Common myeloid progenitor, CD34-positive (primary cell): ENCODE measurements at regions of chr1 and their contacts with region 1.

Region 1: GRCh38 chr1:179809506-179810366 is 66.6 kb downstream of the FAM163A start:
- DNase-seq: peak; percentile 78 to 88 (median 85)
- H3K4me3 ChIP-seq: no peak overlapping the region
- H3K27ac ChIP-seq: no peak overlapping the region
- H3K4me1 ChIP-seq: peaks cover 0 to 6% (median 4%) of the 10 kb centered on the region in 4 experiments
- H3K27me3 ChIP-seq: peaks cover 0 to 4% (median 0%) of the 10 kb centered on the region in 5 experiments

Region 2: GRCh38 chr1:179129702-179130473 is 679.8 kb before region 1 on chr1:
- CTCF ChIA-PET with region 1: no interaction called
- POLR2A ChIA-PET with region 1: no interaction called
- DNase-seq: peak; percentile 47 to 84 (median 74)
- H3K4me3 ChIP-seq: peak overlapping the region in 3 of 7 experiments; percentile 11 to 42 (median 22)
- H3K27ac ChIP-seq: peak overlapping the region in 1 of 2 experiments; percentile 5
- H3K4me1 ChIP-seq: peaks cover 0 to 10% (median 4%) of the 10 kb centered on the region in 4 experiments
- H3K27me3 ChIP-seq: no peaks in the 10 kb centered on the region

Region 3: GRCh38 chr1:179706339-179706941 is 103.3 kb before region 1 on chr1:
- CTCF ChIA-PET with region 1: interaction called, 561 read pairs
- POLR2A ChIA-PET with region 1: interaction called, 8 read pairs
- DNase-seq: peak; percentile 70 to 86 (median 82)
- H3K4me3 ChIP-seq: no peak overlapping the region
- H3K27ac ChIP-seq: no peak overlapping the region
- H3K4me1 ChIP-seq: peaks cover 0 to 13% (median 3%) of the 10 kb centered on the region in 4 experiments
- H3K27me3 ChIP-seq: peaks cover 0 to 11% (median 0%) of the 10 kb centered on the region in 5 experiments

Region 4: GRCh38 chr1:179793281-179793680 is 16.5 kb before region 1 on chr1:
- CTCF ChIA-PET with region 1: interaction called, 23 read pairs
- POLR2A ChIA-PET with region 1: interaction called, 4 read pairs
- DNase-seq: no peak
- H3K4me3 ChIP-seq: no peak overlapping the region
- H3K27ac ChIP-seq: no peak overlapping the region
- H3K4me1 ChIP-seq: no peaks in the 10 kb centered on the region
- H3K27me3 ChIP-seq: peaks cover 0 to 3% (median 0%) of the 10 kb centered on the region in 5 experiments

Region 5: DNA sequence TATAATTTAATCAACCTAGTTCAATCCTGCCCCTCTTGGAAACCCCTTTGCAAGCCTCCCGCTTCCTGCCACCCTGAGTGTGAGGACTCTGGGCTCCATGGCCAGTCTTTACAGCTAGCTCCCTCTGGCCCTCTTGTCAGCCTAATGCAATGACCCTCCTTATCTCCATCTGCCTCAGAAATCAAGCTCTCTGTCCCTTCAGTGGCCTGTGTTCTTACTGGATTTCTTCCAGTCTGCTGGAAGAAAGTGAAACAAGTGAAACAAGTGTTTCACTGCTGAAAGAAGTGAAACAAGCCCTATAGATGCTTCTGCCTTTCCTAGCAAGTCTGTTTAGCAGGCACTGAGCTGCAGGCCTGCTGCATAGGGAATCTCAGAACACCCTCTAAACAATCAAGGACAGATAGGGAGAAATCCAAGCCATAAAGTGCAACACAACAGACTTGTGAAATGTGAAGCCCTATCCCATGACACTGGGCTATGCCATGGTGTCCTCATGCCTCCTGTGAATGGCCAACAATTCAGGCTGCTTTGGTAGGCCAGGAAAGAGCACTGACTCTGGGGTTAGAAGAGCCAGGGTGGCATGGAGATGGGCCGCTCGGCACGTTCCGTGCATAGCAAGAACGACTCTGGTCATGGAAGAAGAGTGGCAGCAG is 10.7 kb before region 1 on chr1:
- CTCF ChIA-PET with region 1: interaction called, 23 read pairs
- POLR2A ChIA-PET with region 1: interaction called, 4 read pairs
- DNase-seq: no peak
- H3K4me3 ChIP-seq: no peak overlapping the region
- H3K27ac ChIP-seq: no peak overlapping the region
- H3K4me1 ChIP-seq: no peaks in the 10 kb centered on the region
- H3K27me3 ChIP-seq: peaks cover 0 to 6% (median 0%) of the 10 kb centered on the region in 5 experiments

Region 6: DNA sequence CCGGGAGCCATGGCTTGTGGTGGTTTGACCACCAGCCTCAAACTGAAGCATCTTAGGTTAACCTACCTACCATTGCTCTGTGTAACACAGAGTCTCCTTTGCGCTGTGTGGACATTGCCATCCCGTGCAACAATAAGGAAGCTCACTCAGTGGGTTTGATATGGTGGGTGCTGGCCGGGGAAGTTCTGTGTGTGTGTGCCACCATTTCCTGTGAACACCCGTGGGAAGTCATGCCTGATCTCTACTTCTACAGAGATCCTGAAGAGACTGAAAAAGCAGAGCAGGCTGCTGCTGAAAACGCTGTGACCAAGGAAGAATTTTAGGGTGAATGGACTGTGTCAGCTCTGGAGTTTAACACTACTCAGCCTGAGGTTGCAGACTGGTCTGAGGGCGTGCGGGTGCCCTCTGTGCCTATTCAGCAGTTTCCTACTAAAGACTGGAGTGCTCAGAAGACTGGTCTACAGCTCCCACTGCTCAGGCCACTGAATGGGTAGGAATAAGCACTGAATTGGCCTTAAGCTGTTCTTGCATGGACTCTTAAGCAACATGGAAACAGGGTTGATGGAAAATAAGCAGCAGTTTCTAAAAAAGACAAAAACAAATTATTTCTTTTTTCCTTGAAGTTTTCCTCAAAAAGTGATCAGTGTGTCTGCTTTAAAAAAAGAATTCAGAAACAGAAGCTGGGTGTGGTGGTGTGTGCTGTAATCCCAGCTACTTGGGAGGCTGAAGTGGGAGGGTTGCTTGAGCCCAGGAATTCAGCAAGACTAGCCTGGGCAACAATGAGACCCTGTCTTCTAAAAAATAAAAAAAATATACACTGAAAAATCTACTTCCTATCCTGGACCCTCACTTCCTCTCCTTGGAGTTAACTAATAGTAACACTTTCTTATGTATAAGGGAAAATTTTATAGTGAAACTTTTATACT is 159.5 kb after region 1 on chr1:
- CTCF ChIA-PET with region 1: no interaction called
- POLR2A ChIA-PET with region 1: no interaction called
- DNase-seq: no peak
- H3K4me3 ChIP-seq: no peak overlapping the region
- H3K27ac ChIP-seq: peak overlapping the region in 1 of 2 experiments; percentile 27
- H3K4me1 ChIP-seq: peaks cover 0 to 22% (median 8%) of the 10 kb centered on the region in 4 experiments
- H3K27me3 ChIP-seq: no peaks in the 10 kb centered on the region

Region 7: GRCh38 chr1:180040034-180040433 is 230.3 kb after region 1 on chr1:
- CTCF ChIA-PET with region 1: no interaction called
- POLR2A ChIA-PET with region 1: no interaction called
- DNase-seq: no peak
- H3K4me3 ChIP-seq: no peak overlapping the region
- H3K27ac ChIP-seq: no peak overlapping the region
- H3K4me1 ChIP-seq: peaks cover 0 to 5% (median 0%) of the 10 kb centered on the region in 4 experiments
- H3K27me3 ChIP-seq: no peaks in the 10 kb centered on the region

Region 8: DNA sequence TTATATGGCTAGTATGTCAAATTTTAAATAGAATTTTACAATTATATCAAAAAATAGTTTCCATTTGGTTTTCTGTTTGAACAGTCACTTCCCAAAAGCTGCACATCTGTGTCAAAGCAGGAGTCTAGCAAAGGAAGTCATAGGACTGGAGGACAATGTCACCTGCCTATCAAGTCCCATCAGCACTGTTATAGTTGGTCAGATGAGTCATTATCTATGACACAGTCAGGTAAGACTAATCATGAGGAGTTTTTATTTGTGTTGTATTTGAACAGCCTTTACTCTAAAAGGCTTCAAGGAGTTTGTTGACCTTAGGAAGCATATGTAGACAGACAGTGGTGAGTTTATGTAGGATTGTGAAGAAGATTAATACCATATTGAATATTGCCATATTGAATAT is 270.7 kb after region 1 on chr1:
- CTCF ChIA-PET with region 1: no interaction called
- POLR2A ChIA-PET with region 1: no interaction called
- DNase-seq: no peak
- H3K4me3 ChIP-seq: no peak overlapping the region
- H3K27ac ChIP-seq: no peak overlapping the region
- H3K4me1 ChIP-seq: no peaks in the 10 kb centered on the region
- H3K27me3 ChIP-seq: no peaks in the 10 kb centered on the region